Posterior vena cava (tissue), 2 donors: ENCODE measurements at regions of chr10 and their contacts with region 1.

Region 1: GRCh38 chr10:689433-690371 is at the start of gene DIP2C:
- DNase-seq: peak; percentile 91
- total RNA-seq, gene DIP2C: 39.3 to 45.6 TPM

Region 2: GRCh38 chr10:361203-362081 is 328.3 kb before region 1 on chr10:
- intact Hi-C with region 1: no loop called
- DNase-seq: no peak

Region 3: GRCh38 chr10:500876-501275 is 188.8 kb before region 1 on chr10:
- intact Hi-C with region 1: loop called in 1 of 2 experiments (anchors 10 kb)
- DNase-seq: peak; percentile 89

Region 4: GRCh38 chr10:511101-511848 is 178.4 kb before region 1 on chr10:
- intact Hi-C with region 1: loop called (anchors 5 to 10 kb)
- DNase-seq: peak; percentile 96

Region 5: GRCh38 chr10:588241-589165 is 101.2 kb before region 1 on chr10:
- intact Hi-C with region 1: loop called in 1 of 2 experiments (anchors 10 kb)
- DNase-seq: peak; percentile 78

Region 6: GRCh38 chr10:1893235-1893634 is 1203.5 kb after region 1 on chr10:
- intact Hi-C with region 1: no loop called
- DNase-seq: no peak